SK-N-SH (cell line): ENCODE measurements at regions of chr5 and their contacts with region 1.

Region 1: GRCh38 chr5:119267958-119268386 is 87.8 kb upstream of the TNFAIP8 start:
- DNase-seq: peak; percentile 83
- H3K4me3 ChIP-seq: peak overlapping the region; percentile 64 to 100
- H3K27ac ChIP-seq: peak overlapping the region; percentile 85 to 89
- H3K4me1 ChIP-seq: peaks cover 0 to 16% of the 10 kb centered on the region in 2 experiments; a peak in 2 of 4 replicates
- H3K27me3 ChIP-seq: no peaks in the 10 kb centered on the region
- CTCF ChIP-seq: peak; percentile 34
- EP300 ChIP-seq: no peak
- RAD21 ChIP-seq: peak; percentile 5; the same call in 1 of the 2 replicates

Region 2: GRCh38 chr5:119070828-119071572 is 197.0 kb before region 1 on chr5 and contains the start of gene DMXL1:
- CTCF ChIA-PET with region 1: interaction called, 3 read pairs
- POLR2A ChIA-PET with region 1: interaction called, 11 read pairs
- DNase-seq: peak; percentile 90
- H3K4me3 ChIP-seq: peak within 1 kb of the TSS; percentile 89 to 95
- H3K27ac ChIP-seq: peak within 1 kb of the TSS; percentile 81 to 92
- H3K4me1 ChIP-seq: peaks cover 0 to 4% of the 10 kb centered on the region in 2 experiments; a peak in 2 of 4 replicates
- H3K27me3 ChIP-seq: no peaks in the 10 kb centered on the region
- CTCF ChIP-seq: no peak
- EP300 ChIP-seq: peak in 1 of 2 experiments; percentile 37; a peak in 1 of 4 replicates
- RAD21 ChIP-seq: no peak
- polyA plus RNA-seq, gene DMXL1: 6.6 and 7.6 TPM in 2 replicates

Region 3: DNA sequence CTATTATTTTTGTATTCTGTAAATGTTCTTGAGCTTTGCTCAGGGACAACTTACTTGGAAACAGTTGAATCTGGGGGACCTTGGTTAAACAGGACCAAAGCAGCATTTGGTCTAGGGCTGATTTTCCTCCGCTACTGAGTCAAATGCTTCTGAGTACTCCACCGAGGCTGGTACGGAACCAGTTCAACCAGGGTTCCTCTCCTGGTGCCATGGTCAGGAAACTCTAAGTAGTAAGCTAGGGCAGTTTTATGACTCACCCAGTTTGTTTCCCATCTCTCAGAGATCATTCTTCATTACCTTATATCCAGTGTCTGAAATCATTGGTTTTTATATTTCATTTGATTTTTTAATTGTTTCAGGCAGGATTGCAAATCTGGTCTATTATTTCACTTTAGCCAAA is 24.1 kb before region 1 on chr5:
- CTCF ChIA-PET with region 1: no interaction called
- POLR2A ChIA-PET with region 1: no interaction called
- DNase-seq: no peak
- H3K4me3 ChIP-seq: no peak overlapping the region
- H3K27ac ChIP-seq: no peak overlapping the region
- H3K4me1 ChIP-seq: no peaks in the 10 kb centered on the region
- H3K27me3 ChIP-seq: no peaks in the 10 kb centered on the region
- CTCF ChIP-seq: no peak
- EP300 ChIP-seq: no peak
- RAD21 ChIP-seq: no peak